Posterior cingulate gyrus (tissue), 11 donors: ENCODE measurements at regions of chr10 and their contacts with region 1.

Region 1: DNA sequence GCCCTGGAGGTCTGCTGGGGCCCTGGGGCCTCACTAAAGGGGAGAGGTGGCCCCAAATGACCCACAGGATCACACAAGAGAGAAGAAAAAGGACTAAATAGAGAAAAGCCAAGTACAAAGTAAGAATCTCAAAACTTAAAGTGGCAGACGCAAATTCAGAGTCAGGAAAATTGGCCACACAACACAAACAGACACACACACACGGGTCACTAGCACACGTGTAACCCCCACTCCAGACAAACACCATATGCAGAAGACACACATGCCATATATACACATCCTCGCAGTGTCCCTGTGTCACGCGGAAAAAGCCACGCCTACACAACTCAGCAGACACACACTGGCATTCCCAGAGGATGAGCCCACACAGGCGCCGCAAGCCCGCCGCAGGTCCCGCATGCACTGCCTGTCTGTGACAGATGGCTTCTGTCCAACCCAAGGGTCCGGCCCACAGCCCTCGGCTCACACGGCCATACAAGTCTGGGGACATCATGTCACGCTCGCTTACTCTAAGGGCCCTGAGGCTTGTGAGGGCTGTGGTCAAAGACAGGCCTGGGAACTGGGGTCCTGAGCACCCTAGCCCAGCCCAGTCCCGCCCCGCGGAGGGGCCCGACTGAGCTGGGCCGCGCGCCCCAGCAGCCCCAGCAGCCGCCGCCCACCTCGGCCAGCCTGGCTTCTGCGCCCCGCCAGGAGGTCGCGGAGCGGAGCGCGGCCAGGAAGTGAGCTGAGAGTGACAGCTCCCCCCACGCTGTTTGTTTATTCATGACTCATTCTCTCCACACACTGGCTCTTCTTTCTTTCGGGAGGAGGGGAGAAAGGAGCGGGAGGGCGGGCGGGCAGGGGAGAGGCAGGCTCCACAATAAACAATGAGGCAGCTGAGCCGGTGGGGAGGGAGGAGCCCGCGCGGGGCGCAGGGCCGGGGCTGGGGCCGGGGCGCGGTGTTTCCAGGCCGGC is 95.5 kb upstream of the ZMIZ1 start:
- DNase-seq: peak; percentile 71 to 97 (median 81)

Region 2: GRCh38 chr10:78913219-78914059 is 59.8 kb before region 1 on chr10:
- intact Hi-C with region 1: loop called (anchors 2 kb)
- DNase-seq: peak; percentile 88 to 99 (median 94)

Region 3: GRCh38 chr10:79068562-79069324 is 95.5 kb after region 1 on chr10 and contains the start of gene ZMIZ1:
- intact Hi-C with region 1: loop called (anchors 1 kb)
- DNase-seq: peak; percentile 75 to 97 (median 84)